Right ventricle myocardium inferior (tissue), 1 donor: ENCODE measurements at regions of chr11 and their contacts with region 1.

Region 1: GRCh38 chr11:84922836-84923235 is 704.3 kb downstream of the DLG2 start:
- DNase-seq: no peak
- ATAC-seq: peak; percentile 56

Region 2: DNA sequence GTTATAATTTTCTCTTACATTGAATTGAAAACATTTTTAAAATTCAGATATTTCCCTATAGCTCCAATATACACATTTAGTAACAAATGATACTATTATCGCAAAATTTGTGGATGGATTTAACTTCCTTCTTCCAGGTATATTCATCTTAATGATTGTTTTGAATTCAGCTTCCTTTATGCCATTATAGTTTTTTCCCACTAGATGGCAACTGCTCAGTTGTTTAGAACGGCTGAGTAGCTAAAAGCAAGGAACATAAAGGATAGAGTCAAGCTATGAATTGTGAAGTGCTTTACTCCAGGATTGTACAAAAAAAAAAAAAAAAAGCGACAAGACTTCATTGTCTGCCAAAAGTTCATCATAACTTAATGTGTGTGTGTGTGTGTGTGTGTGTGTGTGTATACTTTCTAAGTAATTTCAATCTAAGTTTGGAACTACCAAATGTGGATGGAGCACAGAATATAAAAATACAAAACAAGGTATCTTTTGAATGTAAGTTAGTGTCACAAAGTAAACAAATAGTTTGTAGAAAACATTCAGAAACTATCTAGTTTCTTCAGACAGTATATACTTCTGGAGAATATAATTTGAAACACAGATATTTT is 142.0 kb before region 1 on chr11:
- intact Hi-C with region 1: loop called (anchors 10 kb)
- DNase-seq: no peak
- ATAC-seq: no peak